AG04449 (cell line): ENCODE measurements at regions of chr7 and their contacts with region 1.

Region 1: DNA sequence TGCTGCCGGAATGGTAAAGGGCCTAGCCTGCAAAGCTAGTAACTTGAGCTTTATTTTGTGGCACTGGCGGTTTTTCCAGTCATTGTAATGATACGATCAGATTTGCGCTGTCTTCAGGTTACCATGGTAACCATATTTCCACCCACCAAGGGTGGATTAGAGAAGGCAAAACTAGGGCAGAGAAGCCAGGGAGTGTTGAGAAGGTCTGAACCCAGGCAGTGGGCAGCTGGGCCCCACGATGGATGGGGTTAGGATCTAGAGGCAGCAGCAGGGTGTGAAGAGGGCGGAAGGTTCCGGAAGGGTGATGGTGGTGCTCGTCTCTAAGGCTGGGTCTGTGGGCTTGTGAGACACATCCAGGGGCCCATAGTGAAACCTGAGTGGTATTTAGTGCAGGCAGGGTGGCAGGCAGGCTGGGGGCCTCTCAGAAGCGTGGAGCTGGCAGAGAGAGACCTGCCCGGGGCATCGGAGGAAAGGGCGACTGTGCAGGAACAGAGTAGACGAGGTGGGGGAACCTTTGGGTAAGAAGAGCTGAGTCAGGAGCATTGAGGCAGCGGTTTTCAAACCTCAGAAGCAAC is 87.9 kb upstream of the GTF2I start:
- DNase-seq: no peak
- H3K4me3 ChIP-seq: no peak overlapping the region
- CTCF ChIP-seq: no peak

Region 2: GRCh38 chr7:74412056-74412455 is 157.5 kb before region 1 on chr7:
- CTCF ChIA-PET with region 1: interaction called, 67 read pairs
- POLR2A ChIA-PET with region 1: no interaction called
- DNase-seq: no peak
- H3K4me3 ChIP-seq: no peak overlapping the region
- CTCF ChIP-seq: no peak

Region 3: DNA sequence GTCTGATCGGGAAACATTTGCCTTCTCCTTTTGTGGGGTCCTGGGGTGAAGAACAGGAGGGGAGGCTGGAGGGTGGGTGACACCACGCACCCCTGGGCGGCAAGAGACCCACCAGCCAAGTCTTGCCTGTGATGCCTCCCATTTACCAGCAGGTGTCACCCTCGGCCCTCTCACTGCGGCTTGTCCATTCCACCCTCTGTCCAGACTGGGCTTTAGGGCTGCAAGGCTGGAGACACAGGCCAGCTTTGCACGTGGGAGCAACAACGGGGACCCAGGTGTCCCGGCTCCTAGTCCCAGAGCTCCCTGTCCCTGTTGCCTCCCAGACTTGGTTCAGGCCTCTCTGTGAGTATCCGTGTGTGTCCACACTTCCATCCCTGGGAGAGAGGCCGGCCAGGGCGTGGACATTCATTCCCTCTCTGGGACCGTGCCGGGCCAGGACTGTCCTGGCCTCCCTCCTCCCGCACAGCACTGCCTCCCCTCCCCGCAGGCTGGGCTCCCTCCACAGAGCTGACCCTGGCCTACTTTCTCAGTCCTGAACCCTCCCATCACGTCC is 152.1 kb before region 1 on chr7:
- CTCF ChIA-PET with region 1: interaction called, 67 read pairs
- POLR2A ChIA-PET with region 1: no interaction called
- DNase-seq: no peak
- H3K4me3 ChIP-seq: no peak overlapping the region
- CTCF ChIP-seq: peak; percentile 98

Region 4: GRCh38 chr7:74449809-74450397 is 119.7 kb before region 1 on chr7:
- CTCF ChIA-PET with region 1: interaction called, 29 read pairs
- POLR2A ChIA-PET with region 1: no interaction called
- DNase-seq: no peak
- H3K4me3 ChIP-seq: no peak overlapping the region
- CTCF ChIP-seq: peak; percentile 73

Region 5: GRCh38 chr7:74489997-74490945 is 79.3 kb before region 1 on chr7:
- CTCF ChIA-PET with region 1: no interaction called
- POLR2A ChIA-PET with region 1: no interaction called
- DNase-seq: no peak
- H3K4me3 ChIP-seq: no peak overlapping the region
- CTCF ChIP-seq: no peak

Region 6: GRCh38 chr7:74584160-74584954 is 14.8 kb after region 1 on chr7:
- CTCF ChIA-PET with region 1: interaction called, 11 read pairs
- POLR2A ChIA-PET with region 1: no interaction called
- DNase-seq: no peak
- H3K4me3 ChIP-seq: no peak overlapping the region
- CTCF ChIP-seq: no peak